ENCODE measurements at regions of chr3 and their contacts with region 1.

Region 1: GRCh38 chr3:187739561-187740332 is 5.5 kb downstream of the BCL6 start:
- DNase-seq: peak; percentile 90 to 93
- H3K4me3 ChIP-seq: peak overlapping the region; percentile 75 to 78
- H3K27ac ChIP-seq: peak overlapping the region; percentile 93 to 99
- H3K4me1 ChIP-seq: peaks cover 0 to 41% (median 28%) of the 10 kb centered on the region in 4 donors
- H3K27me3 ChIP-seq: no peaks in the 10 kb centered on the region
- CTCF ChIP-seq: peak; percentile 97

Region 2: DNA sequence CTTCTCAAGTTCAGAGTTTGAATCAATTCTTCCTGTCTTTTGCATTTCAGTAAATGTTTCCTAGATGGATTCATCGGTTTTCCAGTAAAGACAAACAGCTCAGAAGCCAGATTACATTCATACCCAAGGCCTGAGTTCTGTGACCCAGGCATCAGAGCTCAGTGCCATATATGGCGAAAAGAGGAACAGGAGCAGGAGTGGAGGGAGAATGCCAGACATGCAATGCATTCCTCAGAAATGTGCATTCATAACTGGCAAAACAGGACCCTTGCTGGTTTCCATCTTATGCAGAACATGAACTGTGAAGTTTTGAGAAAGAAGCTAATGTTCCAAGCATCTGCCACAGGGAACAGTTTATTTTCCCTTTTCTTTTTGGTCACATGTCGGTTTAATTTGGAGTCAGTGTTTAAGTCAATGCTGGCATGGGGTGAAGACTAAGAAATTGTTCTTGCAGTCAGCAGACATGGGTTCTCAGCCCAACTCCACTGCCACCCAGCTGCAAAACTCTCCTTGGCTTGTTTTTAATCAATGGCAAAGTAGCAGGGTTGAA is 530.8 kb after region 1 on chr3:
- intact Hi-C with region 1: loop called (anchors 5 kb)
- DNase-seq: peak in 1 of 2 donors; percentile 65
- H3K4me3 ChIP-seq: no peak overlapping the region
- H3K27ac ChIP-seq: peak overlapping the region; percentile 90 to 96
- H3K4me1 ChIP-seq: peaks cover 0 to 98% (median 86%) of the 10 kb centered on the region in 4 donors
- H3K27me3 ChIP-seq: no peaks in the 10 kb centered on the region
- CTCF ChIP-seq: no peak

Region 3: GRCh38 chr3:188954590-188955208 is 1215.0 kb after region 1 on chr3:
- intact Hi-C with region 1: loop called (anchors 2 kb)
- DNase-seq: peak; percentile 82 to 90
- H3K4me3 ChIP-seq: no peak overlapping the region
- H3K27ac ChIP-seq: peak overlapping the region in 1 of 2 donors; percentile 17
- H3K4me1 ChIP-seq: peaks cover 4 to 41% (median 23%) of the 10 kb centered on the region in 4 donors
- H3K27me3 ChIP-seq: no peaks in the 10 kb centered on the region
- CTCF ChIP-seq: peak; percentile 88 to 94

Region 4: GRCh38 chr3:189148081-189148507 is 1408.3 kb after region 1 on chr3:
- intact Hi-C with region 1: loop called (anchors 5 kb)
- DNase-seq: peak; percentile 70 to 75
- H3K4me3 ChIP-seq: no peak overlapping the region
- H3K27ac ChIP-seq: peak overlapping the region in 1 of 2 donors; percentile 30
- H3K4me1 ChIP-seq: peaks cover 0 to 7% (median 2%) of the 10 kb centered on the region in 4 donors
- H3K27me3 ChIP-seq: no peaks in the 10 kb centered on the region
- CTCF ChIP-seq: peak; percentile 72 to 88

Measured in tibial artery (tissue), 4 donors.